WTC11 (cell line): ENCODE measurements at regions of chr15 and their contacts with region 1.

Region 1: DNA sequence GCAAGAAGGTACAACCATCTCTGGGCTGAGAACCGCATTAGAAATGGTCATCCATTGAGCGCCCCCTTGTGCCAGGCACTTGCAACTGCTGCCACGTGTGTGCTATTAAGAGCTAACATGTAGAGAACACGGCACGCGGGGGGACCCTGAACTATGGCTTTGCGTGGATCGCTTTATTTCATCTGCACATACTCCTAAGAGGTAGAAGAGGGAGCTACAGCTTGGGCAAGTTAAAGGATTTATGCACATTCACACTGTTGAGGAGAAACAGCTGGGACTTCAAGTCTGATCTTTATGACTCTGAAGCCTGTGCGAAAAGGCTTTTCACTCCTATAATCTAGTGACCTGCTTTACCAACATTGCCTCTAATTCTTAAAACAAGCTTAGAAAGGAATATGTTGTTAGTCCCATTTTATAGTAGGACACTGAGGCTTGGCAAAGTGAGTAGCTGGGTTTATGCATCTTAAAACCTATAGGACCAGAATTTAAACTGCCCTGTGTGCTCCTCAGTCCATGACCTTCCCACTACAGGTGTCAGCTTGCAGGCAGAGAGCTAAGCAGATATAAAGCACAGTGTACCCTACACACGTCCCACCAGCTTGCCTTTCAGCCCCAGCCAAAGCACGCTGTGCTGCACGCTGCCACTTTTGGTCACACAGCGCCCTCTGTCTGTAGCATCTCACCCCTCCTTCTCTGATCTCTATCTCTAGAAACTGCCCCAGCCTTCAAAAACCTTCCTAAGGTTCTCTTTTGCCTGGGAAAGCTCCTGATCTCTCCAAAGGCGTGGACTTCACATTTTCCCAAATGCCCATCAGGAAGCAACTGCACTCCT is 57.8 kb downstream of the STARD5 start:
- DNase-seq: peak; percentile 90
- ATAC-seq: peak; percentile 93
- H3K4me3 Mint-ChIP-seq: peak overlapping the region; percentile 58
- H3K27ac Mint-ChIP-seq: no peak overlapping the region
- H3K4me1 Mint-ChIP-seq: peaks cover 13% of the 10 kb centered on the region
- H3K27me3 Mint-ChIP-seq: no peaks in the 10 kb centered on the region
- CTCF ChIP-seq: peak; percentile 78

Region 2: GRCh38 chr15:80970018-80970658 is 296.0 kb before region 1 on chr15:
- CTCF ChIA-PET with region 1: interaction called, 82 read pairs
- POLR2A ChIA-PET with region 1: no interaction called
- DNase-seq: peak; percentile 52
- ATAC-seq: 0 out of 2 replicates have a peak, but pooled peaks have one; percentile 6
- H3K4me3 Mint-ChIP-seq: no peak overlapping the region
- H3K27ac Mint-ChIP-seq: peak overlapping the region; percentile 61; the same call in 1 of the 2 replicates
- H3K4me1 Mint-ChIP-seq: peaks cover 60% of the 10 kb centered on the region
- H3K27me3 Mint-ChIP-seq: no peaks in the 10 kb centered on the region
- CTCF ChIP-seq: peak; percentile 84

Region 3: GRCh38 chr15:81106560-81106959 is 159.6 kb before region 1 on chr15:
- CTCF ChIA-PET with region 1: interaction called, 238 read pairs
- POLR2A ChIA-PET with region 1: no interaction called
- DNase-seq: peak; percentile 42
- ATAC-seq: peak; percentile 71
- H3K4me3 Mint-ChIP-seq: no peak overlapping the region
- H3K27ac Mint-ChIP-seq: no peak overlapping the region
- H3K4me1 Mint-ChIP-seq: peaks cover 7% of the 10 kb centered on the region
- H3K27me3 Mint-ChIP-seq: no peaks in the 10 kb centered on the region; the same call in 1 of the 2 replicates
- CTCF ChIP-seq: no peak

Region 4: GRCh38 chr15:81170511-81170910 is 95.6 kb before region 1 on chr15:
- CTCF ChIA-PET with region 1: interaction called, 61 read pairs
- POLR2A ChIA-PET with region 1: no interaction called
- DNase-seq: no peak
- ATAC-seq: no peak
- H3K4me3 Mint-ChIP-seq: no peak overlapping the region
- H3K27ac Mint-ChIP-seq: no peak overlapping the region
- H3K4me1 Mint-ChIP-seq: no peaks in the 10 kb centered on the region
- H3K27me3 Mint-ChIP-seq: no peaks in the 10 kb centered on the region
- CTCF ChIP-seq: no peak

Region 5: DNA sequence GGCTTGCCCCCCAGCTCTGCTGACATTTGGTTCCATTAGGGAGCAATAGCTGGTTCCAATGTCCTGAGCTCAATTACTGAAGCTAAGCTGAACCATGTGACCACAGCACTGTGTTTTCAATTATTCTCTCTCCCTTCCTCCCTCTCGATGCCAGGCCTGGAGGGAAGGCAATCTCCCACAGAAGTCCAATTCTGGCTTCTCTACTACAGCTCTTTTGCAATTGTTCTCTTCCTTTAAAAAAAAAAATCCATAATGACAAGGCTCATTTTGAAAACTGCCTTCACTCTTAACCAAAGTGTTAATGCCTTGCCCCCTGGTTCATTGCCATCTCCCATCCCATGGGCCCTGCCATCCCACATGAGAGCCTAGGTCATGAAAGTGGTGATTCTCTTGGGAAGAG is 44.7 kb before region 1 on chr15:
- CTCF ChIA-PET with region 1: interaction called, 25 read pairs
- POLR2A ChIA-PET with region 1: no interaction called
- DNase-seq: no peak
- ATAC-seq: no peak
- H3K4me3 Mint-ChIP-seq: no peak overlapping the region
- H3K27ac Mint-ChIP-seq: no peak overlapping the region
- H3K4me1 Mint-ChIP-seq: peaks cover 4% of the 10 kb centered on the region
- H3K27me3 Mint-ChIP-seq: no peaks in the 10 kb centered on the region; the same call in 1 of the 2 replicates
- CTCF ChIP-seq: no peak

Region 6: GRCh38 chr15:81304226-81304625 is 38.1 kb after region 1 on chr15:
- CTCF ChIA-PET with region 1: interaction called, 14 read pairs
- POLR2A ChIA-PET with region 1: no interaction called
- DNase-seq: no peak
- ATAC-seq: no peak
- H3K4me3 Mint-ChIP-seq: no peak overlapping the region
- H3K27ac Mint-ChIP-seq: peak overlapping the region; percentile 52
- H3K4me1 Mint-ChIP-seq: peaks cover 31% of the 10 kb centered on the region
- H3K27me3 Mint-ChIP-seq: no peaks in the 10 kb centered on the region
- CTCF ChIP-seq: no peak

Region 7: GRCh38 chr15:81400640-81401236 is 134.6 kb after region 1 on chr15:
- CTCF ChIA-PET with region 1: interaction called, 36 read pairs
- POLR2A ChIA-PET with region 1: no interaction called
- DNase-seq: no peak
- ATAC-seq: peak; percentile 48; the same call in 1 of the 2 replicates
- H3K4me3 Mint-ChIP-seq: no peak overlapping the region
- H3K27ac Mint-ChIP-seq: no peak overlapping the region
- H3K4me1 Mint-ChIP-seq: no peaks in the 10 kb centered on the region; the same call in 1 of the 2 replicates
- H3K27me3 Mint-ChIP-seq: no peaks in the 10 kb centered on the region
- CTCF ChIP-seq: peak; percentile 38; the same call in 1 of the 2 replicates

Region 8: DNA sequence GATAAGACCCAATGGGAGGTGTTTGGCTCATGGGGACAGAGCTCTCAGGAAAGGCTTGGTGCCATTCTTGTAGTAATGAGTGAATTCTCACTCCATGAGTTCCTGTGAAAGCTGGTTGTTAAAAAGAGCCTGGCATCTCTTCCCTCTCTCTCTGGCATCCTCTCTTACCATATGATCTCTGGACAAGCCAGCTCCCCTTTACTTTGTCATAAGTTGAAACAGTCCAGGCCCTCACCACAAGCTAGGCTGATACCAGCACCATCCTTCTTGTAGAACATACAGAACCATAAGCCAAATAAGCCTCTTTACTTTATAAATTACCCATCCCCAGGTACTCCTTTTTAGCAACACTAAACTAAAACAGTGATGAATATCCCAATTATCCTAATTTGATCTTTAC is 274.7 kb after region 1 on chr15:
- CTCF ChIA-PET with region 1: no interaction called
- POLR2A ChIA-PET with region 1: no interaction called
- DNase-seq: no peak
- ATAC-seq: no peak
- H3K4me3 Mint-ChIP-seq: no peak overlapping the region
- H3K27ac Mint-ChIP-seq: no peak overlapping the region
- H3K4me1 Mint-ChIP-seq: no peaks in the 10 kb centered on the region
- H3K27me3 Mint-ChIP-seq: no peaks in the 10 kb centered on the region
- CTCF ChIP-seq: no peak